Calu3 (cell line): ENCODE measurements at regions of chr6 and their contacts with region 1.

Region 1: DNA sequence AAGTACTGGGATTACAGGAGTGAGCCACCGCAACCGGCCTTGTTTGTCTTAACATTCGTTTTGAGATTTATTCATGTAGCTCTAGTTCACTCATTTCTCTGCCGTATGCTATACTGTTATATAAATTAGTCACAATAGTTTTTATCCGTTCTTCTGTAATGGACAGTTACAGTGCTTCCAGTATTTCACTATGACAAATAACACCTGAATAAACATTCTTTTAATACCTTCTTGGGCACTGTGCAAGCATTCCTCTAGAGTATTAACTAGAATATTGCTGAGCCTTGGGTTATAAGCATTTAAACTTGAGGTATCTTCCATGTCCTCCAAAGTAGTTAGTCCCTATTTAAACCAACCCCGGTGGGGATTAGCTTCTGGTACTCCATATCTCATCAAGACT is 45.6 kb downstream of the STK38 start:
- DNase-seq: no peak
- H3K4me3 Mint-ChIP-seq: no peak overlapping the region
- H3K27ac Mint-ChIP-seq: no peak overlapping the region
- H3K4me1 Mint-ChIP-seq: peaks cover 20% of the 10 kb centered on the region
- H3K27me3 Mint-ChIP-seq: no peaks in the 10 kb centered on the region
- CTCF ChIP-seq: no peak

Region 2: DNA sequence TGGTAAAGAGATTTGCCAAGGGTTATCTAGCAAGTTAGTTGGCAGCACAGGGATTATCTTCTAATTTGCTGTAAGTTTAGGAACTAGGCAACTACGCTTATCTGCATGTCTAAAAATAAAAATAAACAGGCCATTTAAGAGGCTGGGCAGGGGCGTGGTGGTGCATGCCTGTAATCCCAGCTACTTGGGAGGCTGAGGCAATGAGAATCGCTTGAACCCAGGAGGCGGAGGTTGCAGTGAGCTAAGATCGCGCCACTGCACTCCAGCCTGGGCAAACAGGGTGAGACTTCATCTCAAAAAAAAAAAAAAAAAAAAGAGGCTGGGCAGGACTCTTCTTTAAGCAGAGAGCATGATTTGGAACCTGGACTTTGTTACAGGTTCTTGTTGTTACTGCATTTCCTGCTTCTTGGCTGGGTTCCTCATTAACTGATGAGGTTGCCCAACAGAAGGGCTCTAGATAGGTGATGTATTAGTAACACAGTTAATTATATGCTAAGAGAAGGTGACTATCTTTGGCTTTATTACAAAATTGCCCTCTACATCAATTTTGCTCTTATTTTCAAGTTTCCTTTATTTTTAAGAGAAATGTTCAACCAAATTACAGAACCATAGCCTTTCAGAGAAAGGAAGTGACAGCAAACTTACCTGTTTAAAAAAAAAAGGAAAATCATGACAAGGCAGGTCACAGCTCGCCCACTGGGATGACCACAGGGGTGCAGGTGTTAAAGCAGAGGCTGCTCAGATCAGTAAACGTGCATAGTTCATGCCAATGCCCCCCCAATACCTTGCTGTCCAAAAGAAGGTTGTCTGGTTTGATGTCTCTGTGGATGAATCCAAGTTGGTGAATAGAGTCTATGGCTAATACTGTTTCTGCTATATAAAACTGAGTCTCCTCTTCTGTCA is 13.1 kb after region 1 on chr6:
- CTCF ChIA-PET with region 1: no interaction called
- intact Hi-C with region 1: loop called (anchors 2 kb)
- DNase-seq: peak; percentile 51
- H3K4me3 Mint-ChIP-seq: peak overlapping the region; percentile 48
- H3K27ac Mint-ChIP-seq: peak overlapping the region; percentile 52
- H3K4me1 Mint-ChIP-seq: peaks cover 27% of the 10 kb centered on the region
- H3K27me3 Mint-ChIP-seq: no peaks in the 10 kb centered on the region
- CTCF ChIP-seq: no peak